BJ (cell line): ENCODE measurements at regions of chr9 and their contacts with region 1.

Region 1: GRCh38 chr9:134443168-134444037 is 117.1 kb downstream of the RXRA start:
- DNase-seq: peak; percentile 59
- H3K4me3 ChIP-seq: no peak overlapping the region
- H3K27me3 ChIP-seq: no peaks in the 10 kb centered on the region
- CTCF ChIP-seq: peak; percentile 98

Region 2: GRCh38 chr9:134135343-134136118 is 307.9 kb before region 1 on chr9 and contains the start of gene WDR5:
- CTCF ChIA-PET with region 1: interaction called, 10 read pairs
- POLR2A ChIA-PET with region 1: no interaction called
- DNase-seq: no peak
- H3K4me3 ChIP-seq: peak within 1 kb of the TSS; percentile 99
- H3K27me3 ChIP-seq: no peaks in the 10 kb centered on the region
- CTCF ChIP-seq: peak; percentile 39; the same call in 1 of the 2 replicates
- polyA plus RNA-seq, gene WDR5: 23.8 and 24.4 TPM in 2 replicates

Region 3: DNA sequence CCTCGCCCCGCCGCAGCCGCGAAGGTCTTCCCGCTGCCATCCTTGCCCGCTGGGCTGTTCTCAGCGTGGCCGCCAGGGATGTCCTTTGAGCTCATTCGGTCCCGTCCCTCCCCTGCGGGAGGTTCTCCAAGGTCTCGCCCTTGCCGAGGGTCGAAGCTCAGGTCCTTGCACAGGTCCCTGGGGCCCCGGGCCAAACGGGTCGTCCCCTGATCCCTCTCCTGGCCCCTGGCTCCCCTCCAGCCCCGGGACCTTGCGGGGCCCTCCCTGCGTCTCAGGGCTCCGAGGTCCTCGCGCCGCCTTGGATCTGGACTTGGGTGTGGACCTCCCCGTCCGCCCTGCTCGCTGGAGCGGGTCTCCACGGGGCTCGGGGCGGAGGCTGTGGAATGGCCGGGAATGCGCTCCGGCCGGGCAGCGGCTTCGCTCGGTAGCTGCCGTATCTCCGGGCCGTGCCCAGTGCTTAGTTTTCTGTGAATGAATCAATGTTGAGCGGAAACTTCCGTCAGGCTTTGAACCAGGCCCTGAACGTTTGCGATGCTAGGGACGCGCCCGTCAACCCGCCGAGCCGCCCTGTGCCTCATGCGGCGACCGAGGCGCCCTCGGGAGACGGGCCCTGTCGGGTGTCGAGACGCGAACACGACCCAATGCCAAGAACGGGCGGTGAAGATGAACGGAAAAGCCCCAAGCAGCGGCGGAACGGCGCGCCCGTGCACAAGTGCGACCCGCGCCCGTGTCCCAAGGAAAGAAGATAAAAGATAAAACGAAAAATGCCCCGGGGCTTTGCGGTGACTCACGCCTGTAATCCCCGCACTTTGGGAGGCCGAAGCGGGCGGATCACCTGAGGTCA is 279.8 kb before region 1 on chr9:
- CTCF ChIA-PET with region 1: interaction called, 175 read pairs
- POLR2A ChIA-PET with region 1: no interaction called
- DNase-seq: no peak
- H3K4me3 ChIP-seq: peak overlapping the region; percentile 15
- H3K27me3 ChIP-seq: no peaks in the 10 kb centered on the region
- CTCF ChIP-seq: peak; percentile 60

Region 4: DNA sequence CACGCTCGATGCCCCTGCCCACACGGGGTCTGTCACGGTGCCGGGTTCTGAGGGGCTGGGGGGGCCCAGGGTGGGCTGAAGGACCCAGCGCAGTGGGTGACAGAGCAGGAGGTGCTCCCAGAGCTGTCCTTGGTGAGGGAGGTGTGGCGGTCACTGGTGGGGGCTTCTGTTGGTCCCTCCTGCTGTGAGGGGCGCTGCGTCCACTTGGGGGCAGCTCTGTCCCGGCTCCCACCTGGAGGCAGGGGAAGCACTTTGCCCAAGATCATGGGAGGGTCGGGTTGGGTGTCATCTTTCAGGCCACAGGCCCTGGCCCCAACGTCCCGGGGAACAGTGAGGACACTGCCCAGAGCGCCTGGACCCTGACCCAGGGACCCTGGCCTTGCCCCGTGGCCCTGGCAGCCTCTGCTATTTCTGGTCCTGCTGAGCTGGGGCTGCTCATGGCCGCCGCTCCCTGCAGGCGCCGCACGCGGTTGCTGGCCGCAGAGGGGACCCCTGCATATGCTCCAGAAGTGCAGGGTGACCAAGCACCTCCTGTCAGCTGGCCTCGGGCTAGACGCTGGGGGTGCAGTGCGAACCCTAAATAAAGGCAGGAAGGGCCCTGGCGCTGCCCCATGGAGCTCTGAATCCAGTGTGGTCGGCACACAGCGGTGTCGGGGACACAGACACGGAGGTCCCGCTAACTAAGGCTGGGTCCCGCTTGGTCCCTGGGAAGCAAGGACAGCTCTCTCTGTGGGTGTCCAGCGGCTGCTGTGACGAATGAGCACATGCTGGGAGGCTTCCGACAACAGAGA is 267.4 kb before region 1 on chr9:
- CTCF ChIA-PET with region 1: interaction called, 175 read pairs
- POLR2A ChIA-PET with region 1: no interaction called
- DNase-seq: no peak
- H3K4me3 ChIP-seq: no peak overlapping the region
- H3K27me3 ChIP-seq: peaks cover 13% of the 10 kb centered on the region
- CTCF ChIP-seq: no peak

Region 5: GRCh38 chr9:134215699-134216448 is 227.5 kb before region 1 on chr9:
- CTCF ChIA-PET with region 1: interaction called, 11 read pairs
- POLR2A ChIA-PET with region 1: no interaction called
- DNase-seq: peak; percentile 65
- H3K4me3 ChIP-seq: no peak overlapping the region
- H3K27me3 ChIP-seq: peaks cover 3% of the 10 kb centered on the region; the same call in 1 of the 2 replicates
- CTCF ChIP-seq: no peak

Region 6: DNA sequence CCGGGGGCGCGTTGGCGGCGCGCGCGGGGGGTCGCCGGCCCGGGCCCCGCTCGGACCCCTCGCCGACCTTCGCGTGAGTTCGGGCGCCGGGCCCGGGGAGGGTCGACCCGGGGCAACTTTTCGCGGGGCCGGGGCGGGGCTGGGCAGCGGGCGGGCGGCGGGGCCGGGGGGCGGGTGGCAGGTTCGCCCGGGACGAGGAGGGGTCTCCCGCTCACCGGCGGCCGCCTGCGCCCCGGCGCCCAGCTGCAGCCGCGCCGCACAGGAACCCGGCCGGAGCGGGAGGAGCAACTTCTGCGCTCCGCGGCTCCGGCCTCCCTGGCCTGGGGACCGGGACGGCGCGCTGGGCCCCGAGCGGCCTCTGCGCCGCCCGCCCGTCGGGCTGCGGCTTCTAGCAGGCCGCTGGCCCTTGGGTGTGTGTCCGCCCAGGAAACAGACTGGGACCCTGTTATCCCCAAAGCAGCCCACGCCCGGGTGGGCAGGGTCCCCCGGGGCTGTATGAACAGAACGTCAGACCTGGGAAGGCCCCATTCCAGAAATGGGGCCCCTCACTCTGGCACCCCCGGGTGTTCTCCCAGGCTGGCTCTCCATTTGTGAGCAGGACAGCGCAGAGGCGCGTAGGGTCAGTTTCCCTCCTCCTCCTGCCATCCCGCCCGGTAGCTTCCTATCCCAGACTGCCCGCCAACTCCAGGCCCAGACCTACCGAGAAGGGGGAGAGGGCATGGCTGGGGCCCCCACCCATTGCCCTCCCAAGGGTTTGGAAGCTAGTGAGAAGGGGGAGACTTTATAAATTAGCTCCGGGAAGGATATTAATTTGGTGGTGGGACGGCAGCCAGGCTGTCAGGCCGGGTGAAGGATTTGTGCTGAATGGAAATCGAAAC is 116.4 kb before region 1 on chr9:
- CTCF ChIA-PET with region 1: interaction called, 11 read pairs
- POLR2A ChIA-PET with region 1: no interaction called
- DNase-seq: no peak
- H3K4me3 ChIP-seq: peak overlapping the region; percentile 57
- H3K27me3 ChIP-seq: no peaks in the 10 kb centered on the region
- CTCF ChIP-seq: no peak

Region 7: DNA sequence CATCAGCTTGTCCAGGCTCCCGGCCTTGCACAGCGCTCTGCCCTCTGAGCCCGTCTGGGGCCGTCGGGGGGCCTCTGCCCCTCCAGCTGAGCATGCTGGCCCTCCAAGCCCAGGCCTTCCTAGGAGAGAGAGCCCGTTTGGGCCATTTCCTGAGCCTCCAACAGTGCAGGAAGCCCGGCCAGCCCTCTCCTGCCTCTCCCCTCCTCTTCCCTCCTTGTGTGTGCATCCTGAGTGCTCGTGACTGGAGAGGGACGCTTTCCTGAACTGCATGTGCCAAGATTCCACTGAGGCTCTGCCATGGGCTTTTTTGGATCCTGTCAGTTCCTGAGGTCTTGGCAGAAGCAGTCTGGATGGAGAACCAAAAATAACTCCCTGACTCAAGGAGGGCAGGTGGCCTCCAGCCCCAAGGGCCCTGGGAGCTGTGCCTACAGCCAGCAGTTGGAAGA is 659.6 kb after region 1 on chr9:
- CTCF ChIA-PET with region 1: no interaction called
- POLR2A ChIA-PET with region 1: no interaction called
- DNase-seq: no peak
- H3K4me3 ChIP-seq: no peak overlapping the region
- H3K27me3 ChIP-seq: no peaks in the 10 kb centered on the region
- CTCF ChIP-seq: no peak